AG04450 (cell line): ENCODE measurements at regions of chr1 and their contacts with region 1.

Region 1: DNA sequence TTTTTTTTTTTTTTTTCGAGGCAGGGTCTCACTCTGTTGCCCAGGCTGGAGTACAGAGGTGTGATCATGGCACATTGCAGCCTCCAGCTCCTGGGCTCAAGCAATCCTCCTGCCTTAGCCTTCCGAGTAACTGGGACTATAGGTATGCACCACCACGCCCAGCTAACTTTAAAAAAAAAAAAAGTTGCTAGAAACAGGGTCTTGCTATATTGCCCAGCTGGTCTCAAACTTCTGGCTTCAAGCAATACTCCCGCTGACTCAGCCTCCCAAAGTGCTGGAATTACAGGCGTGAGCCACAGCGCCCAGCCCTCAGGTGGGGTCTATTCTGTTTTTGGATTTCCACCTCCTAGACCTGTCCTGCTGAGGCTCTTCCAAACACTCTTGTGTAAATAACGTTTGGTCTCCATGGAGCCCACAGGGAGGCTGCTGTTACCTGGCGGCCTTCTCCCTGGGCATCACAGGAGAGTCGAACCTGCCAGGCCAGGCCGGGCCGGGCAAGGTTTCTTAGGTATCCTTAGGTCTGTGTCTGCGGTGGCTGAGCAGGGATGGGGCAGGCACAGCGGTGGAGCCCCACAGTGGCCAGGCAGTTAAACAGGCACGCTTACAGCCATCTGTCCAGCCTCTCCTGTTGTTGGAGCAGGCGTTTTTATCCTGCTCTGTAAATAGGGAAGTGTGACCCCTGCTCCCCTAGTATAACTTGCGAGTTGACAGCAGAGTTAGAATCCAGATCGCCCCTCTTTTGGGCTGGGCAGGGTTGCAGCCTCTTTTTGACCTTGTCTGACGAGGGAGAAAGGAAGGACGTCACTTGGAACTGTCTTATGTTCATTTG is 18.8 kb downstream of the PLEKHM2 start:
- DNase-seq: no peak
- H3K4me3 ChIP-seq: peak overlapping the region; percentile 0; the same call in 1 of the 2 replicates
- H3K27ac ChIP-seq: peak overlapping the region; percentile 98
- H3K27me3 ChIP-seq: no peaks in the 10 kb centered on the region
- CTCF ChIP-seq: peak; percentile 28; the same call in 1 of the 2 replicates

Region 2: GRCh38 chr1:15371610-15372545 is 331.1 kb before region 1 on chr1:
- CTCF ChIA-PET with region 1: no interaction called
- POLR2A ChIA-PET with region 1: no interaction called
- DNase-seq: no peak
- H3K4me3 ChIP-seq: no peak overlapping the region
- H3K27ac ChIP-seq: peak overlapping the region; percentile 21
- H3K27me3 ChIP-seq: no peaks in the 10 kb centered on the region
- CTCF ChIP-seq: no peak

Region 3: GRCh38 chr1:15723631-15724251 is 20.8 kb after region 1 on chr1:
- CTCF ChIA-PET with region 1: interaction called, 11 read pairs
- POLR2A ChIA-PET with region 1: no interaction called
- DNase-seq: no peak
- H3K4me3 ChIP-seq: no peak overlapping the region
- H3K27ac ChIP-seq: no peak overlapping the region
- H3K27me3 ChIP-seq: no peaks in the 10 kb centered on the region
- CTCF ChIP-seq: no peak